Calu3 (cell line): ENCODE measurements at regions of chr2 and their contacts with region 1.

Region 1: DNA sequence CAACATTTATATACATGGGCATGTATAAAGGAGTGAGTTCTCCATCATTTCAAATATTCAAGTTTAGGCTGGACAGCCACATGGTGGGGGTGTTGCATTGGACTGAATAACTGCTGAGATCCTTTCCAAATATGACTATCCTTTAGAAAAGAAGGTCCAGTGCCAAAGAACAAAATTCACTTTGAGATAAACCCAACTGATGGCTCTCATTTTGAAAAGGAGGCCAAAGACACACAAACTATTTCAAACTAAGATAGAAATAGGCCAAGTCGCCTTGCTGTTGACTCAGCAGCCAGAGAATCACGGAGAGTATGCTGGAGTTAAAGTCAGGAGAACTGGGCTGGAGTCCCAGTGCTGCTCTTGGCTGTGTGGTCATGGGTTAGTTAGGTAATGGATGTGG is 204.5 kb upstream of the LRATD1 start:
- DNase-seq: no peak
- H3K4me3 Mint-ChIP-seq: no peak overlapping the region
- H3K27ac Mint-ChIP-seq: no peak overlapping the region
- H3K4me1 Mint-ChIP-seq: no peaks in the 10 kb centered on the region
- H3K27me3 Mint-ChIP-seq: no peaks in the 10 kb centered on the region
- CTCF ChIP-seq: no peak

Region 2: DNA sequence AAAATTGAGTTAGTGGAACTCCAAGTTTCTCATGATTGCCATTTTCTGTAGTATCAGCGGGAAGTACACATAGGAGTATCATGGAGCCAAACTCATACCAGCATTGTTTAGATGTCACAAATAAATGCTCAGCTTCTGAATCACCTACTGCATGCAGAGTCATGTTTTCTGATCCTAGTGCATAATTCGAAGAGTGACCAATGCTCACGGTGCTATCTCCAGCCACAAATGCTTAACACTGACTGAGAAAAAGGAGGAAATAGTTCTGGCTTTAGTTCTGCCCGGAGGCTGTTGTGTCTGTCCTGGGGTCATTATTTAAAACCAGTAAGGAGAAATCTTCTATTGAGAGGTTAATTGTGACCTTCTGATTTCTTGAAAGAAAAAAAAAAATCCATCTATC is 159.1 kb after region 1 on chr2:
- CTCF ChIA-PET with region 1: no interaction called
- intact Hi-C with region 1: no loop called
- DNase-seq: no peak
- H3K4me3 Mint-ChIP-seq: no peak overlapping the region
- H3K27ac Mint-ChIP-seq: no peak overlapping the region
- H3K4me1 Mint-ChIP-seq: no peaks in the 10 kb centered on the region
- H3K27me3 Mint-ChIP-seq: no peaks in the 10 kb centered on the region
- CTCF ChIP-seq: no peak

Region 3: DNA sequence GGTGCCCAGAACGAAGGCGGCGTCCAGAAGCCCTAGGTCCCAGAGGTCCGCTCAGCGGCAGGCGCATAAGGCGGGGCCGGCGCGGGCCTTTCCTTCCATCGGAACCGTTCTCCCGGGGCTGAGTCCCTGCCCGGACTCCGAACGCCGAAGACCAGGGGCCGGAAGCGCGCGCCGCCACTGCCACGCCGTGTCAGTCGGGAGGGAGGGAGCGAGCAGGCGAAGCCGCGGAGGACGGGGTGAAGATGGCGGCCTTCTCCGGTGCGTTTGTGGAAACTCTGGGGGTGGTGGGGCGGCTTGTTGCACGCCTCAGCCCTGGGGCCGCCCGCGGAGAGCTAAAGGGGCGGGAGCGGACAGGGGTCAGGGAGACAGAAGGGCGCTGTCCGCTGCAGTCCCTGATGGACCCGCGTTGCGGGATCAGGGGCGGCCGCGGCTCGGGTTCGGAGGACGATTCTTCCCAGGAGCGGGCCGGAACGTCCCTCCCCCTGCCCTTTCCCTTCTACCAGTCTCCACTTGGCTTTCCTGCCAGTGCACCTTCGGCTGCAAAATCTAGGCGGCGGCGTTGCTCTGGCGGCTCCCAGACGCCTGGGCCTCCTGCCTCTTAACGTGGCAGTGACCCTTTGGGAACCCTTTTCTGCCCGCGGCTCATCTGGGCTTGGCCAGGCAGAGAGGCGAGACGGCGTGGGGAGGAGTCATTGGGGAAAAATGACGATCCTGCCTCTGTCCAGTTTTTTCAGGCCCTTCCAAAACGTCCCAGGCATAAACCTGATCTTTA is 1163.8 kb after region 1 on chr2 and contains the start of gene DDX1:
- CTCF ChIA-PET with region 1: no interaction called
- intact Hi-C with region 1: loop called (anchors 5 kb)
- DNase-seq: peak; percentile 88
- H3K4me3 Mint-ChIP-seq: peak within 1 kb of the TSS; percentile 98
- H3K27ac Mint-ChIP-seq: peak within 1 kb of the TSS; percentile 94
- H3K4me1 Mint-ChIP-seq: peaks cover 6% of the 10 kb centered on the region
- H3K27me3 Mint-ChIP-seq: no peaks in the 10 kb centered on the region
- CTCF ChIP-seq: no peak
- total RNA-seq, gene DDX1: 99.7 and 106 TPM in 2 replicates